ENCODE measurements at regions of chr15 and their contacts with region 1.

Region 1: GRCh38 chr15:70875001-70875782 is 17.0 kb downstream of the THAP10 start:
- DNase-seq: peak in 1 of 10 donors; percentile 79

Region 2: GRCh38 chr15:70679919-70680231 is 195.3 kb before region 1 on chr15:
- intact Hi-C with region 1: loop called (anchors 10 kb)
- DNase-seq: no peak

Region 3: DNA sequence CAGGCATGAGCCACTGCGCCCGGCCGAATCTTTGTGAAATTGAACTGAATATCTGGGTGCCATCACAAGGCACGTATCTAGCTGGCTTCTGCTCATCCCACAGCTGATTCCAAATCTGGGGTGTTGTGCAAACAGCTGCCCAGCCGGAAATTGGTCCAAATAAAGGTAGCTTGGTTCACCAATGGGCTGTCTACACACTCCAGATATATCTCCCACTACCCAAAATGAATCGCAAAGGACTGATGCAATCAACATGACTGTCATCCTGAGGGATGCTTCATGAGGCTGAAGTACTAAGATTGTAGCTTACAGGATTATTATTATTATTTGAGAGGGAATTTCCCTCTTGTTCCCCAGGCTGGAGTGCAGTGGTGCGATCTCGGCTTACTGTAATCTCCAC is 49.4 kb before region 1 on chr15:
- intact Hi-C with region 1: loop called (anchors 1 kb)
- DNase-seq: no peak

Region 4: GRCh38 chr15:71048913-71049675 is 173.9 kb after region 1 on chr15:
- intact Hi-C with region 1: no loop called
- DNase-seq: no peak

Region 5: GRCh38 chr15:71301958-71302621 is 426.9 kb after region 1 on chr15:
- intact Hi-C with region 1: no loop called
- DNase-seq: no peak

Measured in posterior cingulate gyrus (tissue), 11 donors.